ENCODE measurements at regions of chr4 and their contacts with region 1.

Region 1: GRCh38 chr4:181528570-181529184 is 714.5 kb upstream of the TENM3 start:
- DNase-seq: peak; percentile 79
- H3K4me3 ChIP-seq: no peak overlapping the region
- H3K27ac ChIP-seq: no peak overlapping the region
- H3K4me1 ChIP-seq: no peaks in the 10 kb centered on the region
- H3K27me3 ChIP-seq: peaks cover 70% of the 10 kb centered on the region
- CTCF ChIP-seq: peak; percentile 91

Region 2: DNA sequence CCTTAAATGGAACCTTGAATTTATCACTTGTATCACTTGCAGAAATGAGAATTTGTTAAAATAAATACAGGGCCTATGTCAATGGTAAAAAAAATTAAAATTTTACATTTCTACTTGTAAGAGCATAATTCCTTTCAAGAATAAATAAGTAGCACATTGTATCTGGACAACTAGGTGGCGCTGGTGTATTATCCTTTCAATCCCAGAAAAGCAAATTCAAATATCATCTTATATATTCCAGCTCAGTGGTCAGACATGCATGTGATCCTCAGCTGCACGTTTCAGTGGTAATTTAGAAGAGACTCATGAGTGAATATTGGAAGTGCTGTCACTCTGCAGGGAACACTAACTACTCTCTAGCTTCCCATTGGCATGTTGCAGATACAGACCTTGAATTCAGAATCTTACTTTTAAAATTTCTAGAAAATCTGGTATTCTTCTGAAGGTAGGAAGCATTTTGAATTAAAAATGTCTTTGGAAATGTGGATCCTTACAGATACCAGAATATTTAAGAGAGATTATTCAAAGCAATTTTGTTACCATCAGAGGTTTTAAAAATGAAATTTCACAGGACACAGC is 700.1 kb before region 1 on chr4:
- CTCF ChIA-PET with region 1: interaction called, 4 read pairs
- POLR2A ChIA-PET with region 1: no interaction called
- intact Hi-C with region 1: loop called (anchors 5 kb)
- DNase-seq: peak; percentile 81
- H3K4me3 ChIP-seq: no peak overlapping the region
- H3K27ac ChIP-seq: no peak overlapping the region
- H3K4me1 ChIP-seq: peaks cover 5% of the 10 kb centered on the region
- H3K27me3 ChIP-seq: no peaks in the 10 kb centered on the region
- CTCF ChIP-seq: peak; percentile 86

Region 3: DNA sequence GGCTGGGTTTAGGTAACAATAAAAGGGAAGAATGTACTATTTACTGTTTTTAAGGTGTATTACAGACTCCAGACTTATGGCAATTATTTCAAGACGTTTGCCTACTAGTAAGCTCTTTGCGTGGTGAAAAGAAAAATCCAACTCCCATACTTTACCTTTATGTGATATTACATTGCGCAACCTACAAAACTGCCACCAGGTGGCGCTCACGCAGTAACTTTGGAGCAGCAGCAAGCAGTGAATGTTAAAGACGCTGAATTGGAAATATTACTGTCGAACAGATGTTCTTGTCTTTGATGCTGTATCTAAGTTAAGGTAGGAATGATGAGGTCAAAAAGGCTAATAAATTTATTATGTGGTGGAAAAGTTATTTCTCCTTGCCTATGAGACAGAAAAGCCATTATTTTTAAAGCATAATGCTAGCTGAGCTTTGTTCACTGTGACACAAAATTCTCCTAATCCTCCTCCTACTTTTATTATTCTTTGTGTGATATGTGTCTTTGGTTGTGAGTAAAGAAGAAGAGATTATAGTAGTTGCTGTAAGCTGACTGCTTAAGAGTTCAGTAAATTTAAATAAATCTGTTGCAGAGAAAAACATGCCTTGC is 385.3 kb before region 1 on chr4:
- CTCF ChIA-PET with region 1: interaction called, 9 read pairs
- POLR2A ChIA-PET with region 1: no interaction called
- intact Hi-C with region 1: loop called (anchors 1 kb)
- DNase-seq: peak; percentile 79
- H3K4me3 ChIP-seq: no peak overlapping the region
- H3K27ac ChIP-seq: no peak overlapping the region
- H3K4me1 ChIP-seq: no peaks in the 10 kb centered on the region
- H3K27me3 ChIP-seq: peaks cover 24% of the 10 kb centered on the region
- CTCF ChIP-seq: peak; percentile 92

Region 4: DNA sequence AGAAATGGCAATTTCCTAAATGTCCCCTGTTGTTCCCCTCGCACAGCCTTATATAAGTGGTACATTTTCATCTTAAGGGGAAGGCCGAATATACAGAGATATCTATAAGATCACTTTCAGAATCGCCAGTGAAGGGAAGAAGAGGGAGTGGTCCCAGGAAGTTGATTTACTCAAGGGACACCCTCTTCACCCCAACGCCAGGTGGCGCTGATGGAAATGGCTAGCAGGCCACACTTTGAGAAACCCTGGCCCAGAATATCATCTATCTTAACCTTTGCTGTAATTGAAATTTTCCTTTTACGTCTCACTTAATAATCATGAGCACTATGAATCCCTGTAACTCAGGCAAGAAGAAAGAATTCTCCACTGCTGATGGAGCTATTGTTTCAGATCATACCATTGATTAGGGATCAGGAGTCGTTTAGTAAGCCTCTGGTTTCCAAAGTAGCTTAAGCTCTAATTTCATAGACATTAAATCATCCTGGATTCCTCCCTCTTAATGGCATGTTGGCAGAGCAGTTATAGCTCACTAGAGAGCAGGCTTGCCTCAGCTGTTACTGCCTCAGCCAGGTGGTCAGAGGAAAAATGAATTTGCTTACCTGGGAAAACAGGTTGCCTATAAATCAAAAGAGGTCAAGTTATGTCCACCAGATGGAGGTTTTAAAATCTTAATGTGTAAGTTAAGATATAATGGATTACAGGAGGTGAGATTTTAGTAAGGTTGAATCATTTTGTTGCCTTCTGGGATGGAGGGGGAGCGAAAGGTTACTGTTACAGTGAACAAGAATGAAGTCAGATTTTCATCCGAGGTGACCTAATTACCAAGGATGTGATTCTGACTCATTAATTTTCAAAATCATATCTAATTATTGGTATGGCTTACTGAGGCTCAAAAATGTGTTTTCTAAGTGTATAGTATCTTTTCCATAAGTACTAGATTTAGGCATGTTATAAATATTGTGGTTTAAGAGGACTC is 226.7 kb before region 1 on chr4:
- CTCF ChIA-PET with region 1: no interaction called
- POLR2A ChIA-PET with region 1: no interaction called
- intact Hi-C with region 1: loop called (anchors 5 kb)
- DNase-seq: peak; percentile 50
- H3K4me3 ChIP-seq: no peak overlapping the region
- H3K27ac ChIP-seq: no peak overlapping the region
- H3K4me1 ChIP-seq: no peaks in the 10 kb centered on the region
- H3K27me3 ChIP-seq: peaks cover 56% of the 10 kb centered on the region
- CTCF ChIP-seq: peak; percentile 69

Region 5: DNA sequence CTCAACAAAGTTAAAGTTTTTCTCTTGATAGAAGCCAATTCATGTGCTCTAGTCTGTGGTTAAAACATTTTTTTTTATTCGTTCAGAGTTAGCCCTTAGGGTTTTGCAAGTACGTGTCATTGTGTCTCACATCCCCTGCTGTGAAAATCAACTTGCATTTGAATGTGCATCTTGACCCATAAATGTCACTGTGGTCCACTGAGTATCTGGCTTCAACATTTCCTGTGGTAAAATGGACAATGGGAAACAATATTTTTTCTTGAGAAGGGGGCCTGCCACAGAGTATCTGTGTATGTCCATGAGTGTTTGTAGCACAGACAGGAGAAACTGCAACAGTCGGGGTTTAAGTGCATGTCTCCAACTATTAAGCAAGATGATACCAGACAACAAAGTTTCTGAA is 159.8 kb after region 1 on chr4:
- CTCF ChIA-PET with region 1: no interaction called
- POLR2A ChIA-PET with region 1: no interaction called
- intact Hi-C with region 1: no loop called
- DNase-seq: peak; percentile 1
- H3K4me3 ChIP-seq: no peak overlapping the region
- H3K27ac ChIP-seq: no peak overlapping the region
- H3K4me1 ChIP-seq: no peaks in the 10 kb centered on the region
- H3K27me3 ChIP-seq: peaks cover 83% of the 10 kb centered on the region
- CTCF ChIP-seq: no peak